Left cardiac atrium (tissue), 4 donors: ENCODE measurements at regions of chr6 and their contacts with region 1.

Region 1: GRCh38 chr6:116969211-116969863 is 92.3 kb downstream of the RFX6 start:
- DNase-seq: peak; percentile 13
- ATAC-seq: no peak

Region 2: DNA sequence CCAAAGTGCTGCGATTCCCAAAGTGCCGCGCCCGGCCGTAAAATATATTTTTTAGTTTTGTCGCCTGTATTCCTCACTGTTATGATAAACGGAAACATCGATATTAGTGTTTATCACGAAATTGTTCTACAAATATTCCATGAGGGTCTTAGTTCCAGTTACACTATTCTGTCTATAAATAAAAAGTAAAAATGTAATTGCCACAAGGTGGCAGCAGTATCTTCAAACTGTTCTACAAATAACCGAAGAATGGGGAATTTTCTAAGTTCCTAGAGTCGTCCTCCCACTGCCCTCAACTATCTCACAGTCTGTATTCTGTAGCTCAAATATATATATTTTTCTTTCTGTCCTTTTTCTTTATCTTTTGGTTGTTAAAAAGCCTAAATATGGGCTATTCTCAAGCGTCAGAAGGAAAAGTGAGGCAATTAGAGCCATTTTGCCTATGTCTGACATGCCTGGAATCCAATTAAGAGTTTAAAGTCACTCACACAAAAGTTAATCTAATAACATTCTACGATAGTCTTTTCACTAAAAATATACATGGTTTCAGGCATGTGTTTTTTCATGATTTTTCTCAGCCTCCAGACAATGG is 189.7 kb before region 1 on chr6:
- intact Hi-C with region 1: loop called in 1 of 2 experiments (anchors 5 kb)
- DNase-seq: no peak
- ATAC-seq: peak in 1 of 2 donors; percentile 19

Region 3: GRCh38 chr6:117188627-117189201 is 219.4 kb after region 1 on chr6:
- intact Hi-C with region 1: loop called in 1 of 2 experiments (anchors 5 kb)
- DNase-seq: no peak
- ATAC-seq: no peak

Region 4: DNA sequence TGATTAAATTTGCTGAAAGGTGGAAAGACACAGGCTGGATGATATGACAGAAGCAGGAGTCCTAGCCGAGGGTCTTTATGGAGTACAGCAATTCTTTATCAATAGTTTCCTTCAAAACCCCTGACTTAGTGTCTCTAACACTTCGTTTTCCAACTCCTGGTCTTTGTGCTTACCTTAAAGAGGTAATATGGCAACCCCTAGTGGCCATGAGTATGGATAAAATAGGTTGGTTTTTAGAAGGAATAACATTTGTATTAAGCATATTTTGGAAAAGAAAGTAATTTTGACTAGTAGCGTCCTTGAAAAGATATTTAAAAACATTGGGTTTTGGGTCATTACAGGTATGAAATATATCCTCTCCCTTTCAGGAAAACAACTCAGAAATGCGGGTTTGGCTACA is 347.9 kb after region 1 on chr6:
- intact Hi-C with region 1: loop called in 1 of 2 experiments (anchors 5 kb)
- DNase-seq: no peak
- ATAC-seq: peak in 1 of 2 donors; percentile 34